ENCODE measurements at regions of chr2 and their contacts with region 1.

Region 1: DNA sequence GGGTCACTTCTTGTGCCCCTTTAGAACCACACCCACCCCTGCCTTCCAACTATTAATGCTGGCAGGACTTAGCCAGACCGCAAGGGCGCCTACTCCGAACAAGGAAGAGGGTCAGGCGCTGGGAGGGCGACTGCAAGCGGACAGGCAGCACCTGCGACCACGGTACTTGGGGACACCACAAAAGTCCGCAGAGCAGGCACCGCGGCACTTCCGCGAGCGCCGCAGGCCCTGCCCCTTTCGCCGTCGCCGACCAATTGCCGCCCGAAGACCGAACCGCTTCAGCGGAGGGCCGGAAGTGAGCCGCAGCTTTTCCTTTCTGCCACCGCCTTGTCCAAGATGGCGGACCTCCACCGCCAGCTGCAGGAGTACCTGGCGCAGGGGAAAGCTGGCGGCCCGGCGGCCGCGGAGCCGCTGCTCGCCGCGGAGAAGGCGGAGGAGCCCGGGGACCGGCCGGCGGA is at the start of gene SFT2D3:
- DNase-seq: peak; percentile 89 to 93
- H3K4me3 ChIP-seq: peak within 1 kb of the TSS; percentile 66
- H3K27ac ChIP-seq: peak within 1 kb of the TSS; percentile 94
- H3K4me1 ChIP-seq: peaks cover 32% of the 10 kb centered on the region
- H3K27me3 ChIP-seq: no peaks in the 10 kb centered on the region
- CTCF ChIP-seq: no peak
- total RNA-seq, gene SFT2D3: 7.3 and 8.4 TPM in 2 replicates

Region 2: GRCh38 chr2:127226520-127227263 is 474.5 kb before region 1 on chr2:
- CTCF ChIA-PET with region 1: no interaction called
- POLR2A ChIA-PET with region 1: no interaction called
- intact Hi-C with region 1: loop called (anchors 5 kb)
- DNase-seq: peak; percentile 94 to 100
- H3K4me3 ChIP-seq: no peak overlapping the region
- H3K27ac ChIP-seq: peak overlapping the region; percentile 88
- H3K4me1 ChIP-seq: peaks cover 50% of the 10 kb centered on the region
- H3K27me3 ChIP-seq: no peaks in the 10 kb centered on the region
- CTCF ChIP-seq: no peak

Region 3: GRCh38 chr2:127526149-127527000 is 174.8 kb before region 1 on chr2 and contains the start of gene IWS1:
- CTCF ChIA-PET with region 1: no interaction called
- POLR2A ChIA-PET with region 1: interaction called, 6 read pairs
- intact Hi-C with region 1: loop called (anchors 1 kb)
- DNase-seq: peak; percentile 95
- H3K4me3 ChIP-seq: peak within 1 kb of the TSS; percentile 88
- H3K27ac ChIP-seq: peak within 1 kb of the TSS; percentile 97
- H3K4me1 ChIP-seq: peaks cover 43% of the 10 kb centered on the region
- H3K27me3 ChIP-seq: no peaks in the 10 kb centered on the region
- CTCF ChIP-seq: no peak; the same call in 1 of the 2 replicates
- total RNA-seq, gene IWS1: 47.3 and 51.3 TPM in 2 replicates

Measured in PC-9 (cell line).